CD4-positive, alpha-beta T cell (primary cell): ENCODE measurements at regions of chr5 and their contacts with region 1.

Region 1: GRCh38 chr5:126693806-126694802 is 82.8 kb upstream of the LMNB1 start:
- DNase-seq: no peak
- ATAC-seq: no peak
- H3K4me3 ChIP-seq: no peak overlapping the region
- H3K4me3 Mint-ChIP-seq: no peak overlapping the region
- H3K27ac ChIP-seq: no peak overlapping the region
- H3K27ac Mint-ChIP-seq: no peak overlapping the region
- H3K4me1 ChIP-seq: no peaks in the 10 kb centered on the region
- H3K4me1 Mint-ChIP-seq: no peaks in the 10 kb centered on the region
- H3K27me3 ChIP-seq: no peaks in the 10 kb centered on the region
- H3K27me3 Mint-ChIP-seq: no peaks in the 10 kb centered on the region
- CTCF ChIP-seq: no peak

Region 2: GRCh38 chr5:126732716-126733115 is 38.6 kb after region 1 on chr5:
- CTCF ChIA-PET with region 1: no interaction called
- POLR2A ChIA-PET with region 1: no interaction called
- intact Hi-C with region 1: loop called in 1 of 2 experiments (anchors 5 kb)
- DNase-seq: no peak
- ATAC-seq: no peak
- H3K4me3 ChIP-seq: no peak overlapping the region
- H3K4me3 Mint-ChIP-seq: no peak overlapping the region
- H3K27ac ChIP-seq: no peak overlapping the region
- H3K27ac Mint-ChIP-seq: no peak overlapping the region
- H3K4me1 ChIP-seq: peaks cover 8% of the 10 kb centered on the region
- H3K4me1 Mint-ChIP-seq: peaks cover 6% of the 10 kb centered on the region
- H3K27me3 ChIP-seq: no peaks in the 10 kb centered on the region
- H3K27me3 Mint-ChIP-seq: no peaks in the 10 kb centered on the region
- CTCF ChIP-seq: no peak

Region 3: DNA sequence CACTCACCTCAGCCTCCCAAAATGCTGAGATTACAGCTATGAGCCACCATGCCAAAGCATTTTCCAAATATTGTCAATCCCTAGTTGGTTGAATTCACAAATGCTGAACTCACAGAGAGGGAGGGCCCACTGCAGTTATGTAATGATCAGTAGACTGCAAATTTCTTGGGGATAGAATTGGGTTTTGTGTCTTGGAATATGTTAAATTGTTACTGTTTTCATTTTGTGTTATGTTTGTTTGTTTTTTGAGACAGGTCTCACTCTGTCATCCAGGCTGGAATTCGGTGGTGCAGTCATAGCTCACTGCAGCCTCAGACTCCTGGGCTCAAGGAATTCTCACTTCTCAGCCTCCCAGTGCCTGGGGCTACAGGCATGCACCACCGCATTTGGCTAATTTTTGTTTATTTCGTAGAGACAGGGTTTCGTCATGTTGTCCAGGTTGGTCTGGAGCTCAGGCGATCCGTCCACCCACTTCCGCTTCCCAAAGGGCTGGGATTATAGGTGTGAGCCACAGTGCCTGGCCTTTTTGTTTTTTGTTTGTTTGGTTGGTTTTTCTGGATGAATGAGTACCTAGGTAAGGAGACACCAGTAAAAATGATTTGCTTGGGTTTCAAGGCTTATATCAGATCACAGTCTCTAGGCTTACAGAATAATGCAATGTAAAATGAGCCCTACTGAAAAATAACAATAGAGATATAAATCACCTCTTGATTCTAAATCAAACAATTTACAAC is 51.3 kb after region 1 on chr5:
- CTCF ChIA-PET with region 1: no interaction called
- POLR2A ChIA-PET with region 1: no interaction called
- intact Hi-C with region 1: no loop called
- DNase-seq: no peak
- ATAC-seq: no peak
- H3K4me3 ChIP-seq: no peak overlapping the region
- H3K4me3 Mint-ChIP-seq: no peak overlapping the region
- H3K27ac ChIP-seq: no peak overlapping the region
- H3K27ac Mint-ChIP-seq: no peak overlapping the region
- H3K4me1 ChIP-seq: peaks cover 13% of the 10 kb centered on the region
- H3K4me1 Mint-ChIP-seq: peaks cover 11% of the 10 kb centered on the region
- H3K27me3 ChIP-seq: no peaks in the 10 kb centered on the region
- H3K27me3 Mint-ChIP-seq: no peaks in the 10 kb centered on the region
- CTCF ChIP-seq: no peak